Caco-2 (cell line): ENCODE measurements at regions of chr2 and their contacts with region 1.

Region 1: DNA sequence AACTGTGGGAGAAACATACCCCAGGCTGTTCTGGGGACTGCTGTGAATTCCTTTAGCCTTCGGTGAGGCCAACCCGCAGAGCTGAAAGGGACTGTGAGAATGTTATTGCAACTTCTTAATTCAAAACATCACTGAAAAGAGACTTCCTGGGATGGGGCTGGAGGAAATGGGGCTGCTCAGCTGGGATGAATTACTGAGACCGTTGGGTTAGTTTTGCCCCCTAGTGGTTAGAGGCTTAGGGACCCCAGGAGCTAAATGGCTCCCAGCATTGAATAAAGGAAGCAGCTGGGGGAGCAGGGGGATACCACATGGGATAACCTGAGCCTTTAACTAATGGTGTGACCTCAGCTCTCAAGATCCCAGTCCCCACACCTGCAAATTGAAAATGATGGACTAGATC is 941.1 kb upstream of the FANCL start:
- DNase-seq: peak in 1 of 2 experiments; percentile 38
- H3K4me3 ChIP-seq: no peak overlapping the region
- H3K4me3 Mint-ChIP-seq: no peak overlapping the region
- H3K27ac Mint-ChIP-seq: no peak overlapping the region
- H3K4me1 ChIP-seq: no peaks in the 10 kb centered on the region
- H3K4me1 Mint-ChIP-seq: no peaks in the 10 kb centered on the region
- H3K27me3 ChIP-seq: no peaks in the 10 kb centered on the region
- H3K27me3 Mint-ChIP-seq: peaks cover 2% of the 10 kb centered on the region
- CTCF ChIP-seq: peak; percentile 43 to 65

Region 2: GRCh38 chr2:58842501-58843155 is 339.6 kb before region 1 on chr2:
- CTCF ChIA-PET with region 1: no interaction called
- POLR2A ChIA-PET with region 1: no interaction called
- intact Hi-C with region 1: loop called (anchors 5 kb)
- DNase-seq: peak in 1 of 2 experiments; percentile 52
- H3K4me3 ChIP-seq: no peak overlapping the region
- H3K4me3 Mint-ChIP-seq: peak overlapping the region; percentile 47
- H3K27ac Mint-ChIP-seq: peak overlapping the region; percentile 37
- H3K4me1 ChIP-seq: peaks cover 22% of the 10 kb centered on the region
- H3K4me1 Mint-ChIP-seq: peaks cover 31% of the 10 kb centered on the region
- H3K27me3 ChIP-seq: no peaks in the 10 kb centered on the region
- H3K27me3 Mint-ChIP-seq: no peaks in the 10 kb centered on the region
- CTCF ChIP-seq: no peak

Region 3: DNA sequence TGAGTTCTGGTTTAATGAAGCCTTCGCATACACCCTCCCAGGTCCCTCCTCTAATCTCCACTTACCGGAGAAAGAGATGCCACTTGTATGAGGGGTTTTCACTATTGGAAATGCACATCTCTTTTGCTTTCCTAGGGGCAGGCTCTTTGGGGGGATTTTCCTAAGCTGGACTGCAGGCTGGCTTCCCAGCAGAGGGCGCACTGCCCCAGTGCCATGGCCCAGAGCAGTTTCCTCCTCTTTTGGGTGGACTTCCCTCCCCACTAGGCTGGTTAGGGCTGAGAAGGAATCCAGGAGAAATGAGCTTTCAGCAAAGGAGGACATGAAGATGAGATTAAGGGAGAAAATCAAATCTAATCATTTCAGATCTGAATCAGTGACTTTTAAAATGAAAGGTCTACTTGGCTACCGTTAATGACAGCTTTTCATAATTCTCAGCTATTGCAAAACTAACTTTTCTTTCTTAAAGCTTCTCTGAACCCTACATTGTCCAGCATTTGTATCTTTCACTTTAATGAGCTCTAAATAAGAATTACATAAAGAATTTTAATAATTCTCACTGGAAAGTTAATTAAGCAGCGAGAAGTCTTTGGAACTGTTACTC is 157.0 kb before region 1 on chr2:
- CTCF ChIA-PET with region 1: interaction called, 8 read pairs
- POLR2A ChIA-PET with region 1: no interaction called
- intact Hi-C with region 1: loop called (anchors 1 kb)
- DNase-seq: peak; percentile 39 to 57
- H3K4me3 ChIP-seq: no peak overlapping the region
- H3K4me3 Mint-ChIP-seq: no peak overlapping the region
- H3K27ac Mint-ChIP-seq: no peak overlapping the region
- H3K4me1 ChIP-seq: no peaks in the 10 kb centered on the region
- H3K4me1 Mint-ChIP-seq: no peaks in the 10 kb centered on the region
- H3K27me3 ChIP-seq: no peaks in the 10 kb centered on the region
- H3K27me3 Mint-ChIP-seq: peaks cover 2% of the 10 kb centered on the region
- CTCF ChIP-seq: peak; percentile 76 to 89

Region 4: DNA sequence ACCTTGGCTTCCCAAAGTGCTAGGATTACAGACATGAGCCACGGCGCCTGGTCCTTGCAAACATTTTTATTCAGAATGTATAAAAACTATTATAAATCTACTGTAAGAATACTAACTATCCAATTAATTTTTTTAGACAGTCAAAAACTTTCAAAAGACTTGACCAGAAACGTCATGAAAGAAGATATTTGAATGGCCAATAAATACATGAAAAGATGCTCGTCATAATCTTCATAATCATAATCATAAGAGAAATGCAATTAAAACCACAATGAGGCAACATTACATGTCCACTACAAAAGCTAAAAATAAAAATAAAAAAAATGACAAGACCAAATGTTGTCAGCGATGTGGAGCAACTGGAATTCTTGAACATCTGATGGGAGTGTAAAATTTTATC is 50.8 kb before region 1 on chr2:
- CTCF ChIA-PET with region 1: no interaction called
- POLR2A ChIA-PET with region 1: no interaction called
- intact Hi-C with region 1: no loop called
- DNase-seq: no peak
- H3K4me3 ChIP-seq: no peak overlapping the region
- H3K4me3 Mint-ChIP-seq: no peak overlapping the region
- H3K27ac Mint-ChIP-seq: no peak overlapping the region
- H3K4me1 ChIP-seq: no peaks in the 10 kb centered on the region
- H3K4me1 Mint-ChIP-seq: no peaks in the 10 kb centered on the region
- H3K27me3 ChIP-seq: no peaks in the 10 kb centered on the region
- H3K27me3 Mint-ChIP-seq: no peaks in the 10 kb centered on the region
- CTCF ChIP-seq: no peak